Posterior vena cava (tissue), 2 donors: ENCODE measurements at regions of chr17 and their contacts with region 1.

Region 1: DNA sequence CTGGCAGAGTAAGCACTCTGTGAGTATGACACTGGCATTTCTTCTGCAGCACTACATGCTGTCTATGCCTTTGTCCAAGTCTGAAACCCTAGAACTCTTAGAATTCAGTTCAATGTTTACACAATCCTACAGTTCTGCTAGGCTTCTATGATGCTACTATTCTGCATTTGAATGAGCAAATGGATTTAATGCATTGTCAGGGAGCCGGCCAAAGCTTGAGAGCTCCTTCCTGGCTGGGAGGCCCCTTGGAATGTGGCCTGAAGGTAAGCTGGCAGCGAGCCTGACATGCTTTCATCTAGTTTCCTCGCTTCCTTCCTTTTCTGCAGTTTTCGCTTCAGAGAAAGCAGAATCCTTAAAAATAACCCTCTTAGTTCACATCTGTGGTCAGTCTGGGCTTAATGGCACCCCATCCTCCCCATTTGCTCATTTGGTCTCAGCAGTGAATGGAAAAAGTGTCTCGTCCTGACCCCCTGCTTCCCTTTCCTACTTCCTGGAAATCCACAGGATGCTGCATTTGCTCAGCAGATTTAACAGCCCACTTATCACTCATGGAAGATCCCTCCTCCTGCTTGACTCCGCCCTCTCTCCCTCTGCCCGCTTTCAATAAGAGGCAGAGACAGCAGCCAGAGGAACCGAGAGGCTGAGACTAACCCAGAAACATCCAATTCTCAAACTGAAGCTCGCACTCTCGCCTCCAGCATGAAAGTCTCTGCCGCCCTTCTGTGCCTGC is at the start of gene CCL2:
- DNase-seq: peak; percentile 86
- total RNA-seq, gene CCL2: 39.1 to 155 TPM

Region 2: GRCh38 chr17:34220754-34221395 is 33.9 kb before region 1 on chr17:
- intact Hi-C with region 1: no loop called
- DNase-seq: no peak

Region 3: DNA sequence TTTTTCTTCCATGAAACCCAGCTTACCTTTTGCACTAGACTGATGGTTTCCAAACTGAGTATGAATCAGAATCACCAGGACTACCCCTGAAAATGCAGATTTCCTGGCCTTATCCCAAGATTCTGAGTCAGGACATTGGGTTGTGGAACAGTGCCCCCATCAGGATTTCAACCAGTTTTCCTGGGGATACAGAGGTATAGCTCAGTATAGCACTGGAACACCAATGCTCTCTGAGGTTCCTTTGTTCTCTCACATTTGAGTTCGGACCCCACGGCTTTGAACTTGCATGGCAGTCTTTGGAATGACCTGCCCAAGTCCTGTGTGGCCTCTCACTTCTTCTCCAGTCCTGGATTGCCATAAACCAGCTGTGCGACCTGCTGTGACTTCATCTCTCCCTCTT is 51.6 kb after region 1 on chr17:
- intact Hi-C with region 1: loop called in 1 of 2 experiments (anchors 5 kb)
- DNase-seq: no peak